ENCODE measurements at regions of chr4 and their contacts with region 1.

Region 1: DNA sequence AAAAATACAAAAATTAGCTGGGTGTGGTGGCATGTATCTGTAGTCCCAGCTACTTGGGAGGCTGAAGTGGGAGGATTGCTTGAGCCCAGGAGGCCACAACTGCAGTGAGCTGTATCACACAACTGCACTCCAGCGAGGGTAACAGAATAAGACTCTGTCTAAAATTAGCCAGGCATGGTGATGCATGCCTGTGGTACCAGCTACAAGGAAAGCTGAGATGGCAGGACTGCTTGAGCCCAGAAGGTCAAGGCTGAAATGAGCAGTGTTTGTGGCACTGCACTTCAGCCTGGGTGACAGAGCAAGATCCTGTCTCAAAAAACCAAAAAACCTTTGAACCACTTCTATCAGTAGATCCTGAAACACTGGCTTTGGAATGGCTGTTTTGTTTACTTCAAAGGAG is 10.2 kb downstream of the GRSF1 start:
- DNase-seq: no peak
- ATAC-seq: peak in 2 of 8 donors; percentile 45 to 59
- H3K4me3 ChIP-seq: no peak overlapping the region
- H3K27ac ChIP-seq: no peak overlapping the region
- H3K4me1 ChIP-seq: peaks cover 0 to 8% (median 0%) of the 10 kb centered on the region in 9 donors
- H3K27me3 ChIP-seq: no peaks in the 10 kb centered on the region
- CTCF ChIP-seq: no peak

Region 2: GRCh38 chr4:70704331-70705145 is 125.0 kb before region 1 on chr4:
- intact Hi-C with region 1: loop called in 4 of 10 experiments (anchors 10 kb)
- DNase-seq: peak; percentile 86 to 87
- ATAC-seq: peak; percentile 87 to 93 (median 90)
- H3K4me3 ChIP-seq: peak overlapping the region; percentile 59 to 96 (median 84)
- H3K27ac ChIP-seq: peak overlapping the region; percentile 77 to 99 (median 97)
- H3K4me1 ChIP-seq: peaks cover 3 to 33% (median 17%) of the 10 kb centered on the region in 9 donors
- H3K27me3 ChIP-seq: no peaks in the 10 kb centered on the region
- CTCF ChIP-seq: peak in 8 of 9 donors; percentile 8 to 66 (median 38)